Activated CD4-positive, alpha-beta memory T cell treated with anti-CD3 and anti-CD28 coated beads for 36 hours (primary cell): ENCODE measurements at regions of chr15 and their contacts with region 1.

Region 1: GRCh38 chr15:98000249-98001196 is 40.0 kb downstream of the ARRDC4 start:
- DNase-seq: no peak
- H3K4me3 Mint-ChIP-seq: no peak overlapping the region
- H3K27ac Mint-ChIP-seq: no peak overlapping the region
- H3K4me1 Mint-ChIP-seq: peaks cover 8% of the 10 kb centered on the region
- H3K27me3 Mint-ChIP-seq: no peaks in the 10 kb centered on the region

Region 2: GRCh38 chr15:97915261-97915660 is 85.3 kb before region 1 on chr15:
- CTCF ChIA-PET with region 1: no interaction called
- POLR2A ChIA-PET with region 1: no interaction called
- intact Hi-C with region 1: loop called (anchors 10 kb)
- DNase-seq: no peak
- H3K4me3 Mint-ChIP-seq: no peak overlapping the region
- H3K27ac Mint-ChIP-seq: no peak overlapping the region
- H3K4me1 Mint-ChIP-seq: no peaks in the 10 kb centered on the region
- H3K27me3 Mint-ChIP-seq: no peaks in the 10 kb centered on the region